Pancreas (tissue), 10 donors: ENCODE measurements at regions of chr20 and their contacts with region 1.

Region 1: GRCh38 chr20:14986026-14986655 is 648.7 kb upstream of the FLRT3 start:
- DNase-seq: peak in 4 of 6 donors; percentile 77 to 86 (median 80)
- ATAC-seq: peak; percentile 87 to 91 (median 89)
- H3K4me3 ChIP-seq: no peak overlapping the region
- H3K27ac ChIP-seq: peak overlapping the region; percentile 13 to 87 (median 64)
- H3K4me1 ChIP-seq: peaks cover 7 to 34% (median 18%) of the 10 kb centered on the region in 3 donors
- H3K27me3 ChIP-seq: no peaks in the 10 kb centered on the region
- CTCF ChIP-seq: no peak

Region 2: GRCh38 chr20:14341801-14342200 is 644.3 kb before region 1 on chr20:
- intact Hi-C with region 1: loop called in 1 of 3 experiments (anchors 10 kb)
- DNase-seq: no peak
- ATAC-seq: no peak
- H3K4me3 ChIP-seq: no peak overlapping the region
- H3K27ac ChIP-seq: no peak overlapping the region
- H3K4me1 ChIP-seq: peaks cover 9 to 14% (median 13%) of the 10 kb centered on the region in 3 donors
- H3K27me3 ChIP-seq: no peaks in the 10 kb centered on the region
- CTCF ChIP-seq: no peak

Region 3: GRCh38 chr20:14561741-14562221 is 424.4 kb before region 1 on chr20:
- intact Hi-C with region 1: no loop called
- DNase-seq: no peak
- ATAC-seq: no peak
- H3K4me3 ChIP-seq: no peak overlapping the region
- H3K27ac ChIP-seq: no peak overlapping the region
- H3K4me1 ChIP-seq: no peaks in the 10 kb centered on the region
- H3K27me3 ChIP-seq: no peaks in the 10 kb centered on the region
- CTCF ChIP-seq: no peak